Sigmoid colon (tissue), 7 donors: ENCODE measurements at regions of chr2 and their contacts with region 1.

Region 1: DNA sequence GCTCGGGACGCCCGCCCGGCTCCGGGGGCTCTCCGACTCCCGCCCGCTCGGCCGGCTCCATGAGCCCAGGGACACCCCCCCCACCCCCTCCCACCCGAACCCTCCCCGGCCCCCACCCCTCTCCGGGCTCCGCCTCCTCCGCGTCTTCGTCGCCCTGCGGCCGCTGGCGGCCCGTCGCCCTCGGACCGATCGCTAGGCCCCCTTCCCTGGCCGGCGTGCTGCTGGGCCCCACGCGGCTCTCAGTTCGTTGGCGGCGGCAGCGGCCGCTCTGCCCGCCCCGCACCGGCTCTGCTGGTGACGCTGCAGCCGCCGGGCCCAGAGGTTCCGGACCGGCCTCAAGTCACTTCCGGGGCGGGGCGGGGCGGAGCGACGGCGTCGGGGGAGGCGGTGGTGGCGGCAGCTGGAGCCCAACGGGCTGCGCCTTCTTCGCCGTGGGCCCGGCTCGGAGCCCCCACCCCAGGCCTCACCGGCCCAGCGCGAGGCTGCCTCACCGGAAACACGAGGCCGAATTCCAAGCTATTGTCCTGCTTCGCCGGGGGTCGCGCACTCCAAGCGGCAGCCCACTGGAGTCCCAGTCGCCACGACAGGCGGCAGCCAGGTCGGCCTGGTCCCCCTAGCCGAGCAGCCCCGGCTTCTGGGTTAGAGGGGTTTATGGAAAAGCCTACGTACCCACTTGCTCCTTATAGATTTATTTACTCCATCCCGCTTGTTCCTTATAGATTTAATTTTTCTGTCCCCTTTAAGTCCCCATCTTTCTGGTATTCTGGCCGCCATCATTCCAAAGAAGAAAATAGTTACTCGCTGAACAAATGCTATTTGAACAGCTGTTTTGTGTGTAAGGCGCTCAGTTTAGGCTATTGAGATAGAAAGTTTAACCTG is at the start of gene PSME4:
- DNase-seq: peak; percentile 97
- H3K4me3 ChIP-seq: peak within 1 kb of the TSS; percentile 64 to 94 (median 82)
- H3K27ac ChIP-seq: peak within 1 kb of the TSS; percentile 90 to 98 (median 93)
- H3K4me1 ChIP-seq: peaks cover 0 to 41% (median 28%) of the 10 kb centered on the region in 4 donors
- H3K27me3 ChIP-seq: no peaks in the 10 kb centered on the region
- CTCF ChIP-seq: no peak
- EP300 ChIP-seq: peak in 1 of 4 donors; percentile 6
- POLR2A ChIP-seq: peak; percentile 84 to 95
- total RNA-seq, gene PSME4: 47.8 to 79.8 (median 61.6) TPM

Region 2: DNA sequence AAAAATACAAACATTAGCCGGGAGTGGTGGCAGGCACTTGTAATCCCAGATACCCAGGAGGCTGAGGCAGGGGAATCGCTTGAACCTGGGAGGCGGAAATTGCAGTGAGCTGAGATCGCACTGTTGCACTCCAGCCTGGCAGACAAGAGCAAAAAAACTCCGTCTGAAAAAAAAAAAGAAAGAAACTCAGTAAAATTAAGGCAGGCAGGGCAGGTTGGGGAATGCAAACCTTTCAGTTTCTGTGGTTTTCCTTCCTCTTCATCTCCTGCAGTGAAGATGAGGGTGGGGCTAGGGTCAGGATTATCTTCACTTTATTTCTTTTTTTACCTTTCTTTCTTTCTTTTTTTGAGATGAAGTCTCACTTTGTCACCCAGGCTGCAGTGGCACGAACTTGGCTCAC is 43.0 kb after region 1 on chr2:
- intact Hi-C with region 1: loop called (anchors 5 kb)
- DNase-seq: no peak
- H3K4me3 ChIP-seq: no peak overlapping the region
- H3K27ac ChIP-seq: peak overlapping the region in 3 of 4 donors; percentile 73 to 83 (median 80)
- H3K4me1 ChIP-seq: peaks cover 0 to 56% (median 47%) of the 10 kb centered on the region in 4 donors
- H3K27me3 ChIP-seq: no peaks in the 10 kb centered on the region
- CTCF ChIP-seq: no peak
- EP300 ChIP-seq: no peak
- POLR2A ChIP-seq: no peak

Region 3: DNA sequence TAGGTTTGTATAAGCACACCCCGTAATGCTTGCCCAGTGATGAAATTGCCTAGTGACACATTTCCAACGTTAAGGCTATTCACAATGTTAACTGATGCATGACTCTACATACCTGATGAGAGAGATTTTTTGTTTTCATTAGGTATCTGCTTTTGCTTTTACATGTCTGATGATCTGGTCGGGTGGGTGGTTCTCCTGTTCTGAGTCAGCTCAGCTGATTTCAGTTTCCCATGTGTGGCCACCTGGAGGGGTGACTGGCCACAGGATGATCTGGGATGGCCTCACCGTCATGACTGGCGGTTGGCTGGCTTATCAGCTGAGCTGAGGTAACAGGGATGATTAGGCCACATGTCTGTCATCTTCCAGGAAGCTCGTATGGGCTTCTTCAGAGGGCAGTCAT is 110.6 kb after region 1 on chr2:
- intact Hi-C with region 1: loop called (anchors 10 kb)
- DNase-seq: no peak
- H3K4me3 ChIP-seq: no peak overlapping the region
- H3K27ac ChIP-seq: no peak overlapping the region
- H3K4me1 ChIP-seq: no peaks in the 10 kb centered on the region
- H3K27me3 ChIP-seq: no peaks in the 10 kb centered on the region
- CTCF ChIP-seq: no peak
- EP300 ChIP-seq: no peak
- POLR2A ChIP-seq: no peak

Region 4: GRCh38 chr2:54115284-54116137 is 144.5 kb after region 1 on chr2 and contains the start of gene ACYP2:
- intact Hi-C with region 1: loop called (anchors 1 kb)
- DNase-seq: peak; percentile 98
- H3K4me3 ChIP-seq: peak within 1 kb of the TSS; percentile 60 to 78 (median 72)
- H3K27ac ChIP-seq: peak within 1 kb of the TSS; percentile 92 to 98 (median 96)
- H3K4me1 ChIP-seq: peaks cover 0 to 12% (median 5%) of the 10 kb centered on the region in 4 donors
- H3K27me3 ChIP-seq: no peaks in the 10 kb centered on the region
- CTCF ChIP-seq: peak in 2 of 4 experiments; percentile 11 to 26
- EP300 ChIP-seq: no peak
- POLR2A ChIP-seq: peak; percentile 55 to 72
- total RNA-seq, gene ACYP2: 15.8 to 32.0 (median 26.7) TPM